Mammary epithelial cell (primary cell): ENCODE measurements at regions of chr11 and their contacts with region 1.

Region 1: DNA sequence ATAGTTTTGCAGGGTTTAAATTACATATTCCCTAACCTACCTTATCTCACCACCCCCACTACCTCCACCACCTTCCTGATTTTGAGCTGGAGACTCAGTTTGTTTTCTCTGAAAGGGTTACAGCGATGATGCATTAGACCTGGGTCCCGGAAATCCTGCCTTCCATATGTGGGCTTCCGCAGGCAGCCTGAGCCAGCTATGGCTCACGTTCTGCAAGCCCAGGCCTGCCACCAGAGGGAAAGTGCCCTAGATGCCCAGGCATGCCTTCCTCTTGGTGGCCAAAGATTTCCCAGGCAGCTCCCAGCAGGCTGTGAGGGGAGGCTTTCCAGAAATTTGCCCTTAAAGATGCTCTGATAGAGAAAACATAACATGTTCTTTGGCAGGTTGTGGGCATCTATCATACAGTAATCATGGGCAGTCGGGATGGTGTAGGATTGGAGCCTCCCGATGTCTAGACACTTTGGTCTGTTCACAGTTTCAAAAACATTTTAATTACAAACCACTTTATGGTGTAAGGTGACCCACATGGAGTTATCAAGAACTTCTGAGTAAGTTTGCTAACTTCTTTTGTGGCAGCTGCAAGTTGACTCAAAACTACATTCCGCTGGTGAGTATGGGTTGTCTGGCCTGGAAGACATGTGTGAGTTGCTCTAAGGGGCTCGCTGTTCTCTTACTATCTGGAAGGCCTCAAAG is 79.3 kb downstream of the MICAL2 start:
- DNase-seq: peak; percentile 97
- H3K4me3 ChIP-seq: peak overlapping the region in 1 of 3 experiments; percentile 19
- H3K27ac ChIP-seq: peak overlapping the region; percentile 94
- H3K4me1 ChIP-seq: peaks cover 49% of the 10 kb centered on the region
- H3K27me3 ChIP-seq: no peaks in the 10 kb centered on the region
- CTCF ChIP-seq: peak; percentile 20 to 61

Region 2: GRCh38 chr11:12137938-12138731 is 51.6 kb before region 1 on chr11:
- CTCF ChIA-PET with region 1: no interaction called
- dilution Hi-C with region 1: no loop called
- in situ Hi-C with region 1: no loop called
- intact Hi-C with region 1: loop called (anchors 1 kb)
- DNase-seq: peak; percentile 97
- H3K4me3 ChIP-seq: no peak overlapping the region
- H3K27ac ChIP-seq: peak overlapping the region; percentile 84
- H3K4me1 ChIP-seq: peaks cover 51% of the 10 kb centered on the region
- H3K27me3 ChIP-seq: no peaks in the 10 kb centered on the region
- CTCF ChIP-seq: no peak

Region 3: GRCh38 chr11:12167098-12168000 is 22.3 kb before region 1 on chr11:
- CTCF ChIA-PET with region 1: no interaction called
- dilution Hi-C with region 1: no loop called
- in situ Hi-C with region 1: no loop called
- intact Hi-C with region 1: loop called (anchors 1 kb)
- DNase-seq: peak; percentile 98
- H3K4me3 ChIP-seq: no peak overlapping the region
- H3K27ac ChIP-seq: peak overlapping the region; percentile 95
- H3K4me1 ChIP-seq: peaks cover 68% of the 10 kb centered on the region
- H3K27me3 ChIP-seq: no peaks in the 10 kb centered on the region
- CTCF ChIP-seq: no peak

Region 4: GRCh38 chr11:12175694-12176241 is 13.9 kb before region 1 on chr11:
- CTCF ChIA-PET with region 1: no interaction called
- dilution Hi-C with region 1: no loop called
- in situ Hi-C with region 1: no loop called
- intact Hi-C with region 1: loop called (anchors 1 kb)
- DNase-seq: peak; percentile 97
- H3K4me3 ChIP-seq: no peak overlapping the region
- H3K27ac ChIP-seq: peak overlapping the region; percentile 99
- H3K4me1 ChIP-seq: peaks cover 87% of the 10 kb centered on the region
- H3K27me3 ChIP-seq: no peaks in the 10 kb centered on the region
- CTCF ChIP-seq: no peak

Region 5: DNA sequence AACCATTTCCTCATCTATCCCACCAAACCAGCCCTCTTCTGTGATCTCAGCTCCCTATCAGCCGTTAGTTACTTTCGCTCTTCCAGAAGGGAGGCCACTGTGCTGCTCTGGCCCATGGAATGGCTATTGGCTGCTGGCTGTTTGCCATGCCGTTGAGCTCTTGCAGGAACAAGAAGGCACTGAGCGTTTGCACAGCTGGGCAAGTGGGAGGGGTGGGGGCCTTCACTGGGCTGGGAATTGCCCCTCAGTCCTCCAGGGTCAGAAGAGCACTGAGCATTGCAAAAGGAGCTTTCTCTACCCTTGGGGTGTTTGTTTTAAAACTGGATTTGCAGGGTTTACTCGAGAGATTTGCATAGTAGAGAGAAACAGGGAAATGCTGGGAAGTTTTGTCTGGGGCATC is 58.6 kb after region 1 on chr11:
- CTCF ChIA-PET with region 1: no interaction called
- dilution Hi-C with region 1: no loop called
- in situ Hi-C with region 1: no loop called
- intact Hi-C with region 1: no loop called
- DNase-seq: no peak
- H3K4me3 ChIP-seq: no peak overlapping the region
- H3K27ac ChIP-seq: no peak overlapping the region
- H3K4me1 ChIP-seq: no peaks in the 10 kb centered on the region
- H3K27me3 ChIP-seq: no peaks in the 10 kb centered on the region
- CTCF ChIP-seq: no peak